ENCODE measurements at regions of chr16 and their contacts with region 1.

Region 1: DNA sequence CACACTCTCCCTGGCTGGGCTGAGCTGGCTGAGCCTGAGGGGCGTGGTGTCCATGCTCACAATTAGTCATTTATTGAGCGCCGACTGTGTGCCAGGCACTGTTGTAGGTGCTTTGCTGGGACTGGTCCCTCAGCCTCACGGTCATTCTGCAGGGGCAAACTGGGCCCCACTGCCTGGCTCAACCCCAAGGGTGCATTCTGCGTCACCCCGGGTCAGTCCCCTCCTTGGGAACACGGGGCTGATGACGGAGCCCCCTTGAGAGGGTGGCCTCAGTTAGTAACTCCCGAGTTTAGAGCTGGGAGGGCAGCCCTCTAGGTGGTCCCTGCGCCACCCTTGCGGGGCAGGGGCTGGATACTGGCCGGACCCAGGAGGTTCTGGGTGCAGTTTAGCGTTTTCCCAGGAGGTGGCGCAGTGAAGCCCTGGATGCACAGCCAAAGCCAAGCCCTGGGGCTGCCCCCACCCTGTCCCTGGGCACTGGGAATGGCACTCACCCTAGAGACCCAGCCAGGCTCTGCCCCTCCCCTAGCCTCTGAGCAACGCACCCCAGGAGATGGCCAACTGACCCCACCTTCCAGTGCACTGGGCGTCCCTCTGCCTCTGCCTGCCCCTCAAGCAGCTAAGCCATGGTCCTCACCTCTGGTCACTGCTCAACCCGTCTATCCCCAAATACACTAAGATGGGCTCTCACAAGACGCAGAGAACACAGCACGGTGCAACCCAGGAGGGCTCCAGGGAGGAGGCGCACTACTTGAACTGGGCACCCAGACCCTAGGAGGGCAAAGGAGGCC is 243.2 kb upstream of the GSE1 start:
- DNase-seq: peak in 1 of 2 experiments; percentile 97
- H3K4me3 ChIP-seq: no peak overlapping the region
- H3K27ac ChIP-seq: no peak overlapping the region
- H3K4me1 ChIP-seq: peaks cover 8 to 18% (median 16%) of the 10 kb centered on the region in 4 experiments
- H3K27me3 ChIP-seq: peaks cover 0 to 11% (median 3%) of the 10 kb centered on the region in 4 experiments; a peak in 3 of 7 replicates
- CTCF ChIP-seq: peak; percentile 74 to 87 (median 80)
- EP300 ChIP-seq: no peak
- POLR2A ChIP-seq: no peak
- RAD21 ChIP-seq: peak; percentile 48 to 64

Region 2: GRCh38 chr16:85187002-85187401 is 182.9 kb before region 1 on chr16:
- CTCF ChIA-PET with region 1: no interaction called
- POLR2A ChIA-PET with region 1: no interaction called
- DNase-seq: no peak
- H3K4me3 ChIP-seq: no peak overlapping the region
- H3K27ac ChIP-seq: no peak overlapping the region
- H3K4me1 ChIP-seq: peaks cover 0 to 3% (median under 1%) of the 10 kb centered on the region in 4 experiments; a peak in 5 of 7 replicates
- H3K27me3 ChIP-seq: no peaks in the 10 kb centered on the region
- CTCF ChIP-seq: no peak
- EP300 ChIP-seq: no peak
- POLR2A ChIP-seq: no peak
- RAD21 ChIP-seq: no peak

Region 3: DNA sequence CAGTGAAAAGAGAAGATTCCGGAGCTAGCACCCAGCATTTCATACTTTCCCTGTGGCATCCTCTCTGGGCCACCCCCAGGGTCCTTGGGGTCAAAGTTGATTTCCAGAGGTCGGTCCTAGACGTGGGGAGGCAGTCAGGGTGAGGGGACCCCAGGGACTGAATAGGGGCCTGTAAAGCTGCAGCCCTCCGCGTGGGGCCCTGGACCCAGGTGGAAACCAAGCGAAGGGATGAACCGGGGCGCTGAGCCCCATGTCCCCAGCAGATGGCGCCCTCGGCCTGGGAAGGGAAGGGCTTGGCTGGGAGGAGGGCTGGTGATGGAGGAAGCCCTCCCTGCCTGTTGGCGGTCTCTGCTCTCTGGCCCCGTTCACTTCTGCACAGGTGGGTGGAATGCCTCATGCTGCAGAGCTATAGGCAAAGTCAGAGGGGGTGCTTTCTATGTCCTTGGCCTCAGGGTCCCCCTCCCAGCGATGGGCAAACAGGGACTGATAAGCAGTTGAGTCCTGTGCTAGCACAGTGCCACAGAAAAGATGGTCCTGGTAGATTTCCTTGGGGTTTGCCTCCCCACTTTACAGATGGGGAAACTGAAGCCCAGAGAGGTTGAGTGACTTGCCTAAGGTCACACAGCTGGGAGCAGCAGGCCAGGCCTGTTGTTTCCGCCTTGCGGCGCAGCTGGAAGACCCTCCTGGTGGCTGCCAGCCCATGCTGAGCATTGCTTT is 94.2 kb before region 1 on chr16:
- CTCF ChIA-PET with region 1: interaction called, 11 read pairs
- POLR2A ChIA-PET with region 1: no interaction called
- DNase-seq: peak in 1 of 2 experiments; percentile 96
- H3K4me3 ChIP-seq: no peak overlapping the region
- H3K27ac ChIP-seq: no peak overlapping the region
- H3K4me1 ChIP-seq: peaks cover 0 to 15% (median 4%) of the 10 kb centered on the region in 4 experiments; a peak in 4 of 7 replicates
- H3K27me3 ChIP-seq: peaks cover 0 to under 1% (median 0%) of the 10 kb centered on the region in 4 experiments; a peak in 1 of 7 replicates
- CTCF ChIP-seq: peak; percentile 96 to 99 (median 97)
- EP300 ChIP-seq: no peak
- POLR2A ChIP-seq: no peak
- RAD21 ChIP-seq: peak; percentile 91 to 93

Region 4: GRCh38 chr16:85330694-85331188 is 39.2 kb before region 1 on chr16:
- CTCF ChIA-PET with region 1: interaction called, 19 read pairs
- POLR2A ChIA-PET with region 1: interaction called, 4 read pairs
- DNase-seq: no peak
- H3K4me3 ChIP-seq: peak overlapping the region in 2 of 4 experiments; percentile 32 to 36; a peak in 3 of 8 replicates
- H3K27ac ChIP-seq: no peak overlapping the region
- H3K4me1 ChIP-seq: peaks cover 4 to 51% (median 42%) of the 10 kb centered on the region in 4 experiments
- H3K27me3 ChIP-seq: peaks cover 26 to 56% (median 47%) of the 10 kb centered on the region in 4 experiments
- CTCF ChIP-seq: peak in 2 of 3 experiments; percentile 59 to 74; a peak in 3 of 4 replicates
- EP300 ChIP-seq: no peak
- POLR2A ChIP-seq: no peak
- RAD21 ChIP-seq: peak; percentile 24 to 40

Region 5: GRCh38 chr16:85384840-85385462 is 15.0 kb after region 1 on chr16:
- CTCF ChIA-PET with region 1: interaction called, 78 read pairs
- POLR2A ChIA-PET with region 1: interaction called, 5 read pairs
- DNase-seq: peak in 1 of 2 experiments; percentile 56
- H3K4me3 ChIP-seq: no peak overlapping the region
- H3K27ac ChIP-seq: no peak overlapping the region
- H3K4me1 ChIP-seq: no peaks in the 10 kb centered on the region; a peak in 2 of 7 replicates
- H3K27me3 ChIP-seq: no peaks in the 10 kb centered on the region; a peak in 1 of 7 replicates
- CTCF ChIP-seq: no peak
- EP300 ChIP-seq: no peak
- POLR2A ChIP-seq: no peak
- RAD21 ChIP-seq: no peak

Region 6: DNA sequence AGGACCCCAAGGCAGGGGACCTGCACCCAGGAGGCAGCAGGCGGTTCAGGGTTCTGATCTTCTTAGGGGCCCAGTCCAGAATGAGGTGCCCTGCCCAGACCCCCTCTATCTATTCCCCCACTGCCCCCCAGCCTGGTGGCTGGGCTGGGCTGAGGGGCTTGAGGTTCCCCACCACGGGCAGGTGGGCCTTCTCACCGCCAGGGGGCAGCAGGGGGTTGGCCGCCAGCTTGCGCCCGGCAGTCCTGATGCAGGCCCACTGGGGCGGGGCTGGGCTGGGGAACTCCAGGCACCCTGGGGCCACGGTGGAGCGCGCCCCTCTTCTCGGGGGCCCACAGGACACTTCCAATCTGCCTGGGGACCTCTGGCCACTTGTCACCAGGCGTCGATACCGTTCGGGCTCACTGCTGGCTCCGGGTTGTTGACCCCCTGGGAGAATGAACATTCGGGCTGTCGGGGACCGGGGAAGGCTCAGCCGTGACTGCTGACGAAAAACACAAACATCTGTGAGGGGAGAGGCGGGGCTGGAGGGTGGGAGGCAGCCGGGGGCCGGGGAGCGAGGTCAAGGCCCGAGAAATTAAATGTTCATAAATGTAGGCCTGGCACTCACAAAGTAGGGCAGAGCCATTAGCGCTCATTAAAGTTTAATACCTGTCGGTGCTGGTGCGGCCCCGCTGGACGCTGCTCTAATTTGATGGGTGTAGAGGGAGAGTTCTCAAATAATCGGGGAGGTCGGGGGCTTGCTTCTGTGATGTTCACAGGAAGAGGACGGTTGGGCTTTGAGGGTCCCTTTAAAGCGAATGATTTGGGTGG is 23.9 kb after region 1 on chr16:
- CTCF ChIA-PET with region 1: interaction called, 35 read pairs
- POLR2A ChIA-PET with region 1: no interaction called
- DNase-seq: peak in 1 of 2 experiments; percentile 97
- H3K4me3 ChIP-seq: peak overlapping the region in 1 of 4 experiments; percentile 43; a peak in 1 of 8 replicates
- H3K27ac ChIP-seq: no peak overlapping the region
- H3K4me1 ChIP-seq: peaks cover 0 to 31% (median 25%) of the 10 kb centered on the region in 4 experiments; a peak in 6 of 7 replicates
- H3K27me3 ChIP-seq: no peaks in the 10 kb centered on the region
- CTCF ChIP-seq: peak; percentile 85 to 98 (median 94)
- EP300 ChIP-seq: no peak
- POLR2A ChIP-seq: no peak
- RAD21 ChIP-seq: peak; percentile 72 to 81

Region 7: DNA sequence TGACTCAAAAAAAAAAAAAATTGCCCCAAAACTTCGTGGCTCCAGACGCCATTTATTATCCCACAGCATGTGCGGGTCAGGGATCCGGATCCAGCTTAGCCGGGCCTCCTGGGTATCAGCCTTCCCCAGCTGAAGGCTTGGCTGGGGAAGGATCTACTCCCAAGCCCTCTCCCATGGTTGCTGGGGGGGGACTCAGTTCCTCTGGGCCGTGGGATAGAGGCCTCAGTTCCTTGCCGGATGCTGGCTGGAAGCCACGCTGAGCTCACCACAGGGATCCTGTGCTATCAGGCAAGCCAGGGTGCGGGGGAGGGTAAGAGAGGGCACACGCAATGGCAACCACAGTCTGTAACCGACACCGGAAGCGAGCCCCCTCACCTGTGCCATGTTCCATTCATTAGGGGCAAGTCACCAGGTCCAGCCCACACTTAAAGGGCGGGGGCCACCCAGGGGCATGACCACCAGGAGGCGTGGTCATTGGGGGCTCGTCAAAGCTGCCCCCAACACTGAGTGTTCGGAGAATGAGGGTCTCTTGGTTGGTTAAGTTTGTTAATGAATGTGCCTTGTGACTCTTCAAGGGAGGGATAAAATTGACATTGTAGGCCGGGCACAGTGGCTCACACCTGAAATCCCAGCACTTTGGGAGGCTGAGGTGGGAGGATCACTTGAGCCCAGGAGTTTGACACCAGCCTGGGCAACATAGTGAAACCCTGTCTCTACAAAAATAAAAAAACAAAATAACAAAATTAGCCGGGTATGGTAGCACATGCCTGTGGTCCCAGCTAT is 33.2 kb after region 1 on chr16:
- CTCF ChIA-PET with region 1: interaction called, 13 read pairs
- POLR2A ChIA-PET with region 1: interaction called, 4 read pairs
- DNase-seq: peak in 1 of 2 experiments; percentile 59
- H3K4me3 ChIP-seq: no peak overlapping the region
- H3K27ac ChIP-seq: no peak overlapping the region
- H3K4me1 ChIP-seq: peaks cover 3 to 17% (median 6%) of the 10 kb centered on the region in 4 experiments; a peak in 6 of 7 replicates
- H3K27me3 ChIP-seq: no peaks in the 10 kb centered on the region
- CTCF ChIP-seq: no peak
- EP300 ChIP-seq: no peak
- POLR2A ChIP-seq: no peak
- RAD21 ChIP-seq: no peak

Region 8: DNA sequence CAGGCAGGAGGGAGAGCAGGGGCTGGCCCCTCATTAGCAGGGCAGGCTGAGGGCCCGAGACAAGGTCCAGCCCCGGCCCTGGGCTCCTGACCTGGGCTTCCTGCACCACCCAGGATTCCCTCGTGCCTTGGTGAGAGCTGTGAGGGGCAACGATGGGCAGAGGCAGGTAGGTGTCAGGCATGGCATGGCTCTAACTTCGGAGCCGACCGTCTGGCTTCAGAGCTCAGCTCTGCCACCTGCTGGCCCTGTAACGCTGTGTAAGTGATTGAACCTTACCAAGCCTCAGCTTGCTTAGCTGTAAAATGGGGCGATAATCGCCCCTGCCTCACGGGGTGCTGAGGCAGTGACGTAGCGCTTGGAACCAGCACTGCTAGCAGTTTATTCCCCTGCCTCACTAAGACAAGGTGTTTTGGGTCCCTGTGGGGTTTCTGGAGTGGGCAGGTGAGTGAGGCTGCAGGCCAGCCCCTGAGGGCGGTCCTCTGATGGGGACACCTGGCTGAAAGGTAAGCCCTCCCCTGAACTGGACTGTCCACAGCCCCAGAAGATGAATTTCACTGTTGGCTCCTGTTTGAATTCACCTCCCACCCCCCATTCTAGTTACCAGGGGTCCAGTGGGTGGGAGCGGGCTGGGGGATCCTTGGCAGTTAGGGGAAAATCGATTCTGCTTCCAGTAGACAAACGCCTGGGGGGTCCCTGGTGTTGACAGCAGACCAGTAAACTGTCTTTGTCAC is 58.4 kb after region 1 on chr16:
- CTCF ChIA-PET with region 1: interaction called, 13 read pairs
- POLR2A ChIA-PET with region 1: no interaction called
- DNase-seq: peak in 1 of 2 experiments; percentile 84
- H3K4me3 ChIP-seq: no peak overlapping the region
- H3K27ac ChIP-seq: no peak overlapping the region
- H3K4me1 ChIP-seq: peaks cover 0 to 4% (median 0%) of the 10 kb centered on the region in 4 experiments; a peak in 3 of 7 replicates
- H3K27me3 ChIP-seq: no peaks in the 10 kb centered on the region; a peak in 1 of 7 replicates
- CTCF ChIP-seq: peak; percentile 70 to 87 (median 86)
- EP300 ChIP-seq: no peak
- POLR2A ChIP-seq: no peak
- RAD21 ChIP-seq: peak; percentile 61 to 67

Measured in H1 (cell line).